ENCODE measurements at regions of chr20 and their contacts with region 1.

Region 1: DNA sequence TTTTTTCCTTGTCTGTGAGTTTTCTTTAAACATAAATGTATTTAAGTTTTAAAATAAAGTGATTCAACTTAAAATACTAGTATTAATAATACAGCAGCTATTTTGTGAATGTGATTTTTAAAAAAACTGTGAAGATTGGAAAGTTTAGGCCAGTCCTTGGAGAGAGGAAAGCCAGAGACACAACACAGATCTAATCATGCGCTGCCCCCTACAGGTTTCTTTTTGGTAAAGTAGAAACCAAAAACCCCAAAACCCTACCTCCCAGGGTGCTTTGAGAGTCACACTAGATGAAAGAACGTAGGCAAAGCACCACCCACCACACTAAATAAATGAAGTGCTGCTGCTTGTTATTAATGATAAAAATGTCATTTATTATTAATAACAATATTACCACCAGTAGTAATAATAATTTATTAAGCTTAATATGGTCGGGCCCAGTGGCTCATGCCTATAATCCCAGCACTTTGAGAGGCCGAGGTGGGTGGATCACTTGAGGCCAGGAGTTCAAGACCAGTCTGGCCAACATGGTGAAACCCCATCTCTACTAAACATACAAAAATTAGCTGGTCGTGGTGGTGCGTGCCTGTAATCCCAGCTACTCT is 33.7 kb downstream of the SLC9A8 start:
- DNase-seq: no peak
- ATAC-seq: peak; percentile 82
- H3K4me3 Mint-ChIP-seq: no peak overlapping the region
- H3K27ac Mint-ChIP-seq: no peak overlapping the region
- H3K4me1 Mint-ChIP-seq: peaks cover 17% of the 10 kb centered on the region
- H3K27me3 Mint-ChIP-seq: no peaks in the 10 kb centered on the region
- CTCF ChIP-seq: no peak

Region 2: GRCh38 chr20:49541733-49542513 is 304.4 kb before region 1 on chr20:
- CTCF ChIA-PET with region 1: interaction called, 18 read pairs
- POLR2A ChIA-PET with region 1: no interaction called
- intact Hi-C with region 1: loop called (anchors 1 kb)
- DNase-seq: peak; percentile 21
- ATAC-seq: peak; percentile 80
- H3K4me3 Mint-ChIP-seq: no peak overlapping the region
- H3K27ac Mint-ChIP-seq: no peak overlapping the region
- H3K4me1 Mint-ChIP-seq: no peaks in the 10 kb centered on the region
- H3K27me3 Mint-ChIP-seq: peaks cover 14% of the 10 kb centered on the region
- CTCF ChIP-seq: no peak

Region 3: GRCh38 chr20:49668181-49668877 is 178.0 kb before region 1 on chr20:
- CTCF ChIA-PET with region 1: interaction called, 5 read pairs
- POLR2A ChIA-PET with region 1: interaction called, 3 read pairs
- intact Hi-C with region 1: loop called (anchors 5 kb)
- DNase-seq: peak; percentile 43
- ATAC-seq: peak; percentile 84
- H3K4me3 Mint-ChIP-seq: peak overlapping the region; percentile 68
- H3K27ac Mint-ChIP-seq: peak overlapping the region; percentile 66
- H3K4me1 Mint-ChIP-seq: peaks cover 65% of the 10 kb centered on the region
- H3K27me3 Mint-ChIP-seq: no peaks in the 10 kb centered on the region
- CTCF ChIP-seq: no peak

Region 4: GRCh38 chr20:49754596-49754995 is 91.7 kb before region 1 on chr20:
- CTCF ChIA-PET with region 1: no interaction called
- POLR2A ChIA-PET with region 1: interaction called, 13 read pairs
- intact Hi-C with region 1: no loop called
- DNase-seq: no peak
- ATAC-seq: no peak
- H3K4me3 Mint-ChIP-seq: no peak overlapping the region
- H3K27ac Mint-ChIP-seq: no peak overlapping the region
- H3K4me1 Mint-ChIP-seq: peaks cover 13% of the 10 kb centered on the region
- H3K27me3 Mint-ChIP-seq: no peaks in the 10 kb centered on the region
- CTCF ChIP-seq: no peak

Region 5: DNA sequence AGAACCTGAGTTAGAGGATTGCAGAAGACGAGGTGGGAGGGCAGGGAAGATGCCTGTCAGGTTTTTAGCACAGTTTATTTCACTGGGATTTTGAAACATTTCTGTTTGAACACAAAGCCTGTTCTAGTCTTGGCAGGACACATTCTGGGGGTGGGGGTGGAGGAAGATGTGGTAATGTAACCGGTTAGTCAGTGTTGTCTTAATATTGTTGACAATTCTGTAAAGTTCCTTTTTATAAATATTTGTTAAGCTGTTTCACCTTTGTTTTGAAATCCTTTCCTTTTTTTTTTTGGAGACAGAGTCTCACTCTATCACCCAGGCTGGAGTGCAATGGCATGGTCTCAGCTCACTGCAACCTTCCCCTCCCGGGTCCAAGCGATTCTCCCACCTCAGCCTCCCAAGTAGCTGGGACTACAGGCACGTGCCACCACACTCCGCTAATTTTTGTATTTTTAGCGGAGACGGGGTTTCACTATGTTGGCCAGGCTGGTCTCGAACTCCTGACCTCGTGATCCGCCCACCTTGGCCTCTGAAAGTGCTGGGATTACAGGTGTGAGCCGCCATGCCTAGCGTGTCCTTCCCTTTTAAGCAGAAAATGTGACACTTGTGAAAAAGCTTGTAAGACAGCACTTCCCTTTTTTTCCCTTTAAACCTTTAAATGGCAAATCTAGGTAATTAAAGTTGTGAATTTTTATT is 13.5 kb before region 1 on chr20:
- CTCF ChIA-PET with region 1: interaction called, 10 read pairs
- POLR2A ChIA-PET with region 1: interaction called, 4 read pairs
- intact Hi-C with region 1: no loop called
- DNase-seq: no peak
- ATAC-seq: no peak
- H3K4me3 Mint-ChIP-seq: no peak overlapping the region
- H3K27ac Mint-ChIP-seq: peak overlapping the region; percentile 63
- H3K4me1 Mint-ChIP-seq: peaks cover 25% of the 10 kb centered on the region
- H3K27me3 Mint-ChIP-seq: no peaks in the 10 kb centered on the region
- CTCF ChIP-seq: no peak

Region 6: GRCh38 chr20:49928401-49929141 is 82.3 kb after region 1 on chr20:
- CTCF ChIA-PET with region 1: interaction called, 3 read pairs
- POLR2A ChIA-PET with region 1: no interaction called
- intact Hi-C with region 1: loop called (anchors 5 kb)
- DNase-seq: peak; percentile 48
- ATAC-seq: peak; percentile 85
- H3K4me3 Mint-ChIP-seq: no peak overlapping the region
- H3K27ac Mint-ChIP-seq: no peak overlapping the region
- H3K4me1 Mint-ChIP-seq: peaks cover 4% of the 10 kb centered on the region
- H3K27me3 Mint-ChIP-seq: no peaks in the 10 kb centered on the region
- CTCF ChIP-seq: peak; percentile 59